Posterior cingulate gyrus (tissue), 11 donors: ENCODE measurements at regions of chr11 and their contacts with region 1.

Region 1: GRCh38 chr11:65471410-65471762 is 27.5 kb upstream of the MALAT1 start:
- DNase-seq: peak in 9 of 10 donors; percentile 40 to 96 (median 62)

Region 2: DNA sequence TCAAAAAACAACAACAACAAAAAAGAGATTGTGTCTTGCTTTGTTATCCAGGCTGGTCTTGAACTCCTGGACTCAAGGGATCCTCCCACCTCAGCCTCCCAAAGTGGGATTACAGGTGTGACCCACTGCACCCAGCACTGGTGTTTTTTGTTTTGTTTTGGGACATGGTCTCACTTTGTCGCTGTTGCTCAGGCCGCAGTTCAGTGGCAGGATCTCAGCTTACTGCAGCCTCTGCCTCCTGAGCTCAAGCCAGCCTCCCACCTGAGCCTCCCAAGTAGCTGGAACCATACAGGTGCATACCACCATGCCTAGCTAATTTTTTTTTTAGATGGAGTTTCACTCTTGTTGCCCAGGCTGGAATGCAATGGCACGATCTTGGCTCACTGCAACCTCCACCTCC is 40.9 kb after region 1 on chr11:
- intact Hi-C with region 1: loop called (anchors 5 kb)
- DNase-seq: peak in 4 of 10 donors; percentile 2 to 43 (median 20)

Region 3: DNA sequence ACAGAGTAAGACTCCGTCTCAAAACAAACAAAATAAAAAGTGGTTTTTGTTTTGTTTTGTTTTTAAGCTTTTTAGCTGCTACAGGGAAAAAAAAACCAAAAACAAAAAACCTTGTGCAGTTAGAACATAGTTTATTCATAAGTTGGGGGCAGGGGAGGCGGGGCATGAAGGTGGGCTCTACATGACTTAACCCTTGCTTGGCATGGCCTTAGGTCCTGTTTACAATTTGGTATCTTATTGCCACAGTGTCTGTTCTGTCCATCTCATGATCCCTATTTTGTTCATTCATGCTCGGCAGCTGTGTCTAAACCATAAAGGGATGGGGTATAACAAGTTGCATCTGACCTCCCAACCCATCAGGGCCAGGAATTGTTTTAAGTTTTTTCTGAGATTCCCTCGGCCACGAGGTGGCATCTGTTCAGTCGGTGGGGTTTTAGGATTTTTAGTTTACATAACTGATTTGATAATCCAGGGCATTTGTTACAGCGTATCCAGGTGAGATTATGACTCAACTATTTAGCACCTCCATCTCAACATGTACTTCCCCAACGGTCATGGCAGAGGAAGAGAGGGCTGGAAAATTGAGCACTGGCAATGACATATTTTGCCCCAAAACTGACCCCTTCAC is 302.5 kb after region 1 on chr11:
- intact Hi-C with region 1: no loop called
- DNase-seq: no peak